HEK293T (cell line): ENCODE measurements at regions of chr5 and their contacts with region 1.

Region 1: GRCh38 chr5:177022384-177023308 is at the start of gene ZNF346:
- DNase-seq: peak; percentile 100

Region 2: DNA sequence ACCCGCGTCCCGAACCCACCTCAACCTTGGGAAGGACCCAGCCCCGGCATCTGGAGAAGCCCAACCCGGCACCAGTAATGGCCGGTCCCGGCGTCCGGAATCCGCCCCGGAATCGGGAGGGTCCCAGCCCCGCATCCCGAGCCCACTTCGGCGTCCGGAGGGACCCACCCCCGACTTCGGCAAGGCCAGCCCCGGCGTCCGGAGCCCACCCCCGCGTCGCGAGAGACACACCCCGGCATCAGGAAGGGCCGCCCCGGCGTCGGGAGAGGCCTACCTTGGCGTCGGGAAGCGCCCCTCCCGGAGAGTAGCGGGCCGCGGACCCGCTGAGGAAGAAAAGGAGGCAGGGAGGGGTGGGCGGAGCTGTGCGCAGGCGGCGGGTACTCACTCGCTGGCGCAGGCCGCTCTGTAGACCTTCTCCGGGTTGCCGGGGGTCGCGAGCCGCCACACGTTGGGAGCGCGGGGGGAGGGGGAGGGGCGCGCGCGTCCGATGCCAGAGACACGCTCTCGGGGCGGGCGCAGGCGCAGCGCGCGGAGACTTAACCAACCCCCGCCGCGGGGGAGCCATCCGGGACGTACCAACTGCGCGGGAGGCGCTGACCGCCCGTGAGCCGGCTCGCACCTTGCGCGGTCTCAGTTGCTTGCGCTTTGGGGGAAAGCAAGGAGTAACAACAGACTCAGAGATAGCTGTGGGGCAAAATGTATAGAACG is 16.2 kb before region 1 on chr5 and contains the start of gene UIMC1:
- CTCF ChIA-PET with region 1: interaction called, 4 read pairs
- POLR2A ChIA-PET with region 1: interaction called, 33 read pairs
- DNase-seq: peak; percentile 96